CD4-positive, alpha-beta memory T cell (primary cell): ENCODE measurements at regions of chr5 and their contacts with region 1.

Region 1: GRCh38 chr5:73591102-73591695 is 25.7 kb downstream of the UTP15 start:
- DNase-seq: peak; percentile 51 to 66 (median 62)
- H3K4me3 ChIP-seq: no peak overlapping the region
- H3K4me3 Mint-ChIP-seq: no peak overlapping the region
- H3K27ac ChIP-seq: no peak overlapping the region
- H3K27ac Mint-ChIP-seq: no peak overlapping the region
- H3K4me1 ChIP-seq: no peaks in the 10 kb centered on the region
- H3K4me1 Mint-ChIP-seq: no peaks in the 10 kb centered on the region
- H3K27me3 ChIP-seq: no peaks in the 10 kb centered on the region
- H3K27me3 Mint-ChIP-seq: no peaks in the 10 kb centered on the region

Region 2: DNA sequence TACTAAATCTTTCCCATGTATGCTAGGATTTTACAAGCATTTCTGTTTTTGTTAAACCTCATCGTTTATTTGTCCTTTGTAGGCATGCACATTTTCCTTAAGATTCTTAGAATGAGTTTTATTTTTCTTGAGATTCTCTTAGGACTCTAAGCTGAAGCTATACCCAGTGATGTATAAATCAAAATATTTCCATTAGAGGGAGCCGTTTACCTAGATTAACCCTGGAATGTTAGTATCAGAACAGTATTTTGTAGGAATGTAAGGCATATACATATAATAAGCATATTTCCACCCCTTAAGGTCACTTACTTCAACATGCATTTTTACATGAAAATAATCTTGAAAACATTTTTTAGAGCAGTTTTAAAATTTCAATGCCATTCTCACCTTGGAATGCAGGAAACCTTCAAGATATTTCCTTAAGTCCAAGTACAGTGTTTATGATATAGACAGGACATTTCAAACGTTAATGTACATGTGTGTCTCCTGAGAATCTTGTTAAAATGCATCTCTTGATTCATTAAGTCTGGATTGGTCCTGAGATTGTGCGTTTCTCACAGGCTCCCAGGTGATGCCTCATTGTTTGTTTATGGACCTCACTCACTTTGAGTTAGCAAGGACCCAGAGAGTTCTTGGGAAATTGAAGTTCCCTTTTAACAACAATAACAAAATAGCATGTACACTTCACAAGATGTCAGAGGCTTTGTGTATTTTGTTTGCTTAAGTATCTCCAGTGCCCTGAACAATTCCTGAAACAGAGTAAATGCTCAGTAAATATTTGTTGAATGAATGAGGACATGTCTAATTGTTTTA is 670.3 kb before region 1 on chr5:
- CTCF ChIA-PET with region 1: no interaction called
- POLR2A ChIA-PET with region 1: no interaction called
- intact Hi-C with region 1: no loop called
- DNase-seq: peak in 1 of 5 donors; percentile 9
- H3K4me3 ChIP-seq: no peak overlapping the region
- H3K4me3 Mint-ChIP-seq: no peak overlapping the region
- H3K27ac ChIP-seq: no peak overlapping the region
- H3K27ac Mint-ChIP-seq: no peak overlapping the region
- H3K4me1 ChIP-seq: no peaks in the 10 kb centered on the region
- H3K4me1 Mint-ChIP-seq: peaks cover 0 to 2% (median 0%) of the 10 kb centered on the region in 4 donors
- H3K27me3 ChIP-seq: no peaks in the 10 kb centered on the region
- H3K27me3 Mint-ChIP-seq: no peaks in the 10 kb centered on the region

Region 3: GRCh38 chr5:73605227-73606020 is 14.2 kb after region 1 on chr5:
- CTCF ChIA-PET with region 1: interaction called, 12 read pairs
- POLR2A ChIA-PET with region 1: no interaction called
- intact Hi-C with region 1: no loop called
- DNase-seq: no peak
- H3K4me3 ChIP-seq: no peak overlapping the region
- H3K4me3 Mint-ChIP-seq: no peak overlapping the region
- H3K27ac ChIP-seq: no peak overlapping the region
- H3K27ac Mint-ChIP-seq: no peak overlapping the region
- H3K4me1 ChIP-seq: no peaks in the 10 kb centered on the region
- H3K4me1 Mint-ChIP-seq: no peaks in the 10 kb centered on the region
- H3K27me3 ChIP-seq: no peaks in the 10 kb centered on the region
- H3K27me3 Mint-ChIP-seq: peaks cover 2% of the 10 kb centered on the region in 2 donors

Region 4: DNA sequence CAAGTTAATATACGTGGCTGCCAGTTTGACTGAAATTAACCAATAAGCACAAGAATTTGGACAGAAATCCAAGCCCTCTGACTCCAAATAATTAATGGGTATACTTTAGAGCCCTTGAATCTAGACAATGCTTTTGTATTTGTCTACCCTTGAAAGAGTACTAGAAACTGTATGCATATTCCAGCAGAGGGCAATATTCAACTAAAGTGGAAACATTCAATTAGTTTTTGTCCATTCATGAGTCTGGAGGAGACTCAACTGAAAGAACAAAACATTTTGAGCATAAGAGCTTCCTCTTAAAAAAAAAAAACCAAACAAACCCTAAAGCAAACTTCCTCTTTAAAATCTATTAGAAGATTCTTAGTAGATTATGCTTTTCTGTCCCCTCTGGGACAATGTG is 192.6 kb after region 1 on chr5:
- CTCF ChIA-PET with region 1: interaction called, 185 read pairs
- POLR2A ChIA-PET with region 1: no interaction called
- intact Hi-C with region 1: no loop called
- DNase-seq: no peak
- H3K4me3 ChIP-seq: no peak overlapping the region
- H3K4me3 Mint-ChIP-seq: no peak overlapping the region
- H3K27ac ChIP-seq: no peak overlapping the region
- H3K27ac Mint-ChIP-seq: no peak overlapping the region
- H3K4me1 ChIP-seq: no peaks in the 10 kb centered on the region
- H3K4me1 Mint-ChIP-seq: no peaks in the 10 kb centered on the region
- H3K27me3 ChIP-seq: no peaks in the 10 kb centered on the region
- H3K27me3 Mint-ChIP-seq: peaks cover 6 to 26% of the 10 kb centered on the region in 2 donors

Region 5: DNA sequence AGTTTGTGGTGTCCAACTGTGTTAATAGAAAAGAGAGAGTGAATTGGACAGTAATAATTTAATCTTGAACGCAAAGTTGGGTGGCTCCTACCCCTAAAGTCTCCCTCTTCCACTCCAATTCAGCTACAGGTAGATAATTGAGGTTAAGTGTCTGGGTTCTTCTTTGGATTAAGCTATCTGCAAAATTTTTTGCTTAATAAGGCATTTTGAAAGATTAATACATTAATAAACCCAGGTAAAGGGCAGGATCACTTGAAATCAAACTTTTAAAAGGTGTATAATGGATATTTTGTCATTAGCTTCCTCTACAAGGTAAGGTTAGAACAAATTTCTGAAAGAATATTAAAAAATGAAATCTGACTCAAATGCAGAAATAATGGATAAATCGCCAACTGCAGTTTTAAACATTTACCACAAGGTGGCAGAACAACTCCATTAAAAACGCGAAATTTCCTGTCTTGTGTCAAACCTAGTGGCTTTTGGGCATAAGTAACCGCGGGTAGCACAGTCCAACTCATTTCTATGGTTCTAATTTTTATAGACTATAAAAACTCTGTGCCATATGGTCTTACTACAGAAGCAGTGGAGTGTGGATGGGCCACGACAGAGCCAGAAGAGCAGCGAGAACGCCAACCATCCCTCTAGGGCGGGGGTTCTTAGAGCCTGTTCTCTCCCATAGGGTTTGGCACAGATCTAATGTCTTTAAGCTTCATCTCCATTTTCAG is 311.3 kb after region 1 on chr5:
- CTCF ChIA-PET with region 1: no interaction called
- POLR2A ChIA-PET with region 1: no interaction called
- intact Hi-C with region 1: loop called (anchors 2 kb)
- DNase-seq: peak in 4 of 5 donors; percentile 44 to 51 (median 48)
- H3K4me3 ChIP-seq: no peak overlapping the region
- H3K4me3 Mint-ChIP-seq: no peak overlapping the region
- H3K27ac ChIP-seq: no peak overlapping the region
- H3K27ac Mint-ChIP-seq: no peak overlapping the region
- H3K4me1 ChIP-seq: no peaks in the 10 kb centered on the region
- H3K4me1 Mint-ChIP-seq: no peaks in the 10 kb centered on the region
- H3K27me3 ChIP-seq: no peaks in the 10 kb centered on the region
- H3K27me3 Mint-ChIP-seq: peaks cover 15 to 28% of the 10 kb centered on the region in 2 donors

Region 6: GRCh38 chr5:74648835-74649293 is 1057.7 kb after region 1 on chr5:
- CTCF ChIA-PET with region 1: interaction called, 5 read pairs
- POLR2A ChIA-PET with region 1: no interaction called
- intact Hi-C with region 1: loop called (anchors 1 kb)
- DNase-seq: peak in 4 of 5 donors; percentile 54 to 59 (median 58)
- H3K4me3 ChIP-seq: no peak overlapping the region
- H3K4me3 Mint-ChIP-seq: no peak overlapping the region
- H3K27ac ChIP-seq: no peak overlapping the region
- H3K27ac Mint-ChIP-seq: no peak overlapping the region
- H3K4me1 ChIP-seq: no peaks in the 10 kb centered on the region
- H3K4me1 Mint-ChIP-seq: peaks cover 0 to 3% (median 1%) of the 10 kb centered on the region in 4 donors
- H3K27me3 ChIP-seq: no peaks in the 10 kb centered on the region
- H3K27me3 Mint-ChIP-seq: peaks cover 2 to 3% of the 10 kb centered on the region in 2 donors